GM13977 (cell line): ENCODE measurements at regions of chr2 and their contacts with region 1.

Region 1: GRCh38 chr2:181104512-181105115 is 124.2 kb downstream of the UBE2E3 start:
- DNase-seq: no peak
- CTCF ChIP-seq: peak; percentile 83

Region 2: GRCh38 chr2:180495606-180496005 is 609.0 kb before region 1 on chr2:
- in situ Hi-C with region 1: no loop called
- DNase-seq: no peak
- CTCF ChIP-seq: no peak

Region 3: DNA sequence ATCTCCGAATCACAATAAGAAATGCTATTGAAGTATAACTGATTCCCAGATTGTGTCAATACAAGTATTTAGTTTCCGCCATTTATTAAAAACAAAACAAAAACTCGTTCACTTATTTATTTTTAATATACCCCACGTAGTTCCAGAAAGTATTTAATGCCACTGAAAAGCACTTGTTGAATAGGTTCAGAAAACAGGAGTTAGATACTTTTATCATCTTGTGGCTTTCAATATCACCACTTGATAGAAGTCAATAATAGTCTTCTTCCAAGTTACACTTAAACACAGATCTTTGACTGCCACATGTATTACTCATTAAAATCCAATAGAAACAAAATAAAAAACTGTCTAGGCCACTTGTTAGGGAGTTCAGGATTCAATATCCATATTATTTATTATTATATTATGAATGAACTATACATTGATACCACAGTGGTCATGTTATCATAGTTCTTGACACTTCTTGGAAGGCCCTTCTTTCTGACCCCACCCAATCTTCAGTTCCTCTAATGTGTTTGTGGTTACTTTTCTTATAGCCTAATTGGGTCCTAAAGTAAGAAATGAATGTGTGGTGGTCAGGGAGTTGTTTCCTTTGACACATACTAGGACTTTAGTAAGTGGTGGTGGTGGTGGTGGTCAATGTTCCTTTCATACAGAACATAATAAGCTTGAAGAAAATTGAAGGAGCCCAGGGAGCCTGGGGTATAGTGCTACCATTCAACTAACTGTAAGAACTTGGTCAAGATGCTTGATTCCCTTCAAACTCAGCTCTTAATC is 131.3 kb after region 1 on chr2:
- in situ Hi-C with region 1: loop called (anchors 25 kb)
- DNase-seq: peak; percentile 52
- CTCF ChIP-seq: no peak

Region 4: GRCh38 chr2:181457121-181457740 is 352.6 kb after region 1 on chr2 and contains the start of gene ITGA4:
- in situ Hi-C with region 1: loop called (anchors 10 kb)
- DNase-seq: peak; percentile 82
- CTCF ChIP-seq: peak; percentile 97